CD4-positive, alpha-beta memory T cell (primary cell): ENCODE measurements at regions of chr3 and their contacts with region 1.

Region 1: GRCh38 chr3:105414841-105415240 is 48.1 kb downstream of the ALCAM start:
- DNase-seq: no peak
- H3K4me3 ChIP-seq: no peak overlapping the region
- H3K4me3 Mint-ChIP-seq: no peak overlapping the region
- H3K27ac ChIP-seq: no peak overlapping the region
- H3K27ac Mint-ChIP-seq: no peak overlapping the region
- H3K4me1 ChIP-seq: no peaks in the 10 kb centered on the region
- H3K4me1 Mint-ChIP-seq: peaks cover 0 to 8% (median 1%) of the 10 kb centered on the region in 4 donors
- H3K27me3 ChIP-seq: no peaks in the 10 kb centered on the region
- H3K27me3 Mint-ChIP-seq: no peaks in the 10 kb centered on the region

Region 2: DNA sequence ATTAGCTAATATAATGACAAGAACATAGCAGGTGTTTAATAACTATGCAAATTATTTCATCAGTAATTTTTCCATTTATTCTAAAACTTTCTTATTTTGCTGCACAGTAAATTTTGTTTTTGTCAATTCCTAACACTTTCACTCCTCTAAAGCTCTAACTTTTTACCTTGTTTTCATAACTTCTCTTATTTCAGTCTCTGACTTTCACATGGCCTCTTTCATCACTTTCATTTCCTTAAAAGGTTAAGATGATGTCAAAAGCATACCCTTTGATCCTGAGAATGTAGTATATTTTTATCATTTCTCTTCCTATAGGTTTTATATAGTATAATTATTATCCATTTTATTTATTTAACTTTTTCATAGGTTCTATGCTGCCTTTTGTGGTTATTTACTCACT is 1373.9 kb before region 1 on chr3:
- CTCF ChIA-PET with region 1: no interaction called
- POLR2A ChIA-PET with region 1: no interaction called
- intact Hi-C with region 1: loop called (anchors 5 kb)
- DNase-seq: no peak
- H3K4me3 ChIP-seq: no peak overlapping the region
- H3K4me3 Mint-ChIP-seq: no peak overlapping the region
- H3K27ac ChIP-seq: no peak overlapping the region
- H3K27ac Mint-ChIP-seq: no peak overlapping the region
- H3K4me1 ChIP-seq: no peaks in the 10 kb centered on the region
- H3K4me1 Mint-ChIP-seq: no peaks in the 10 kb centered on the region
- H3K27me3 ChIP-seq: no peaks in the 10 kb centered on the region
- H3K27me3 Mint-ChIP-seq: peaks cover 0 to 1% of the 10 kb centered on the region in 2 donors

Region 3: DNA sequence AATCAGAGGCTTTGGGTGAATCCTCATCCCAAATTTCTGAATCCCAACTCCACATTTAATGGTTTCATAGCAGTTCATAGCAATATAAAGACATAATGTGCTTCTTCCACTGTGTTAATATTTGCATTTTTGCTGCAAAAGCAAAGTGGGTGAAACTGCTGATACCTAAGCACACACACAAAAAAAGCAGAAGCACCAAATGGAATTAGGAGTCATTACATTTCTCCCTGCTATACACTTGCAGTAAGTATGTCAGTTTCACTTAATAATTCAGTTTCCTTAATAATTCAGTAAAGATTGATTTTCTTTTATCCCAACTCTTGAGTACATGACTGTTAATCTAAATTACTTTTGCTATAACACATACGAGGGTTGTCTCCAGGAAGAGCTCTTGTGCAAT is 97.0 kb before region 1 on chr3:
- CTCF ChIA-PET with region 1: no interaction called
- POLR2A ChIA-PET with region 1: no interaction called
- intact Hi-C with region 1: no loop called
- DNase-seq: no peak
- H3K4me3 ChIP-seq: no peak overlapping the region
- H3K4me3 Mint-ChIP-seq: no peak overlapping the region
- H3K27ac ChIP-seq: no peak overlapping the region
- H3K27ac Mint-ChIP-seq: no peak overlapping the region
- H3K4me1 ChIP-seq: no peaks in the 10 kb centered on the region
- H3K4me1 Mint-ChIP-seq: no peaks in the 10 kb centered on the region
- H3K27me3 ChIP-seq: no peaks in the 10 kb centered on the region
- H3K27me3 Mint-ChIP-seq: peaks cover 0 to 2% of the 10 kb centered on the region in 2 donors

Region 4: DNA sequence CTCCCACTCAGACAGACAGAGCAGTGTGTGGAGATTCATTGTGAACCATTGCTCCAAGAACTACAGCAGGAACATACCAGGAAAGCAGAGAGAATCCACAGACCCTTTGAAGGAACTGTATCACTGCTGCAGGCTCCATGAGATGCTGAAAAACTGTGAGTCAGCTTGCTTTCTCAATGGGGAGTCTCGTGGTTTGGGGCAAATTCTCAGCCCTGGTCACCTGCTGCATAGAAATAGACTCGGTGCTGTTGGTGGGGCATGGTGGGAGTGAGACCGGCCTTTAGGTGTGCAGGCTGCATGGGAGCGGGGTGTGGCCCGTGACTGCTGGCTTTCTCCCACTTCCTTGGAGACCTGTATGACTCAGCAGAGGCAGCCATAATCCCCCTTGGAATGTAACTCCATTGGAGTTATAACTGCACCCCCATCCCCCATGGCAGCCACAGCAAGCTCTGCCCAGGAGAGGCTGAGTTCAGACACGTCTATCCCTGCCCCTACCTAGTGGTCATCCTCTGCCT is 12.5 kb before region 1 on chr3:
- CTCF ChIA-PET with region 1: no interaction called
- POLR2A ChIA-PET with region 1: no interaction called
- intact Hi-C with region 1: no loop called
- DNase-seq: no peak
- H3K4me3 ChIP-seq: no peak overlapping the region
- H3K4me3 Mint-ChIP-seq: no peak overlapping the region
- H3K27ac ChIP-seq: no peak overlapping the region
- H3K27ac Mint-ChIP-seq: peak overlapping the region in 1 of 7 donors; percentile 32
- H3K4me1 ChIP-seq: no peaks in the 10 kb centered on the region
- H3K4me1 Mint-ChIP-seq: no peaks in the 10 kb centered on the region
- H3K27me3 ChIP-seq: no peaks in the 10 kb centered on the region
- H3K27me3 Mint-ChIP-seq: no peaks in the 10 kb centered on the region

Region 5: DNA sequence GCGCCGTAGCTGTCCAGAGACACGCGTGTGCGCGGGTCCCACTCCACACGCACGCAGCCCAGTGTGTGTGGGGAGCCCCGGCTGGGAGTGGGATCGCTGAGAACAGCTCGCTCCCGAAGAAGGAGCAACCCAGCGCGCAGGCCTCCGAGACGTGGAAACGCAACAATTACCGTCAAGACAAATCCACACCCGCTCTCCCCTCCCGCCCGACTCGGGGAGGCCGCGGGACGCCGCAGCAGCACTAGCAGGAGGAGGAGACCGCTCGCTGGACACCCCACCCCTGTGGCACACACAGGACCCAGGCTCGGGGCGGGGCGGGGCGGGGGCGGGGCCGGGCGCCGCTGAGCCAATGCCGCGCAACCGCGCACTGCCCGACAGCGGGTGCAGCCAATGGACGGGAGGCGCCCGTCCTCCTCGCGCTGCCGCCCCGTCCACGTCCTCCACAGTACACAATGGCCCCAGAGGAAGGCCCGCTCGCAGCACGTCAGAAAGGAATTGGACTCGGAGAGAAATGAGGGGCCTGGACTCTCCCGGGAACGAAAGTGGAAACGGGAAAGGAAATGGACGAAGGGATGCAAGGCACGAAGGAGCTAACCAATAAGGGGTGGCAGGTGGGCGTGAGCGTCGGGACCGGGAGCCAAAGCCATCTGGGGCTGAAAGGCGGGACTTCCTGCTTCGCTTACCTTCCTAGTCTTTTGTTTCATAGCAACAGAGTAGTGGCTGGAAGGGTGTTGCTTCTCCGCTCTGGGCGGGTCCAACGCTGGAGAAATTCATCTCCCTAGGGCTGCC is 454.1 kb after region 1 on chr3 and contains the start of gene CBLB:
- CTCF ChIA-PET with region 1: no interaction called
- POLR2A ChIA-PET with region 1: no interaction called
- intact Hi-C with region 1: no loop called
- DNase-seq: peak; percentile 87 to 91 (median 89)
- H3K4me3 ChIP-seq: peak within 1 kb of the TSS; percentile 93
- H3K4me3 Mint-ChIP-seq: peak within 1 kb of the TSS; percentile 95 to 100 (median 99)
- H3K27ac ChIP-seq: peak within 1 kb of the TSS; percentile 84
- H3K27ac Mint-ChIP-seq: peak within 1 kb of the TSS; percentile 87 to 100 (median 99)
- H3K4me1 ChIP-seq: peaks cover 44% of the 10 kb centered on the region
- H3K4me1 Mint-ChIP-seq: peaks cover 35 to 61% (median 47%) of the 10 kb centered on the region in 4 donors
- H3K27me3 ChIP-seq: no peaks in the 10 kb centered on the region
- H3K27me3 Mint-ChIP-seq: no peaks in the 10 kb centered on the region
- total RNA-seq, gene CBLB: 93.5 to 106 TPM